Naive thymus-derived CD4-positive, alpha-beta T cell (primary cell): ENCODE measurements at regions of chr1 and their contacts with region 1.

Region 1: DNA sequence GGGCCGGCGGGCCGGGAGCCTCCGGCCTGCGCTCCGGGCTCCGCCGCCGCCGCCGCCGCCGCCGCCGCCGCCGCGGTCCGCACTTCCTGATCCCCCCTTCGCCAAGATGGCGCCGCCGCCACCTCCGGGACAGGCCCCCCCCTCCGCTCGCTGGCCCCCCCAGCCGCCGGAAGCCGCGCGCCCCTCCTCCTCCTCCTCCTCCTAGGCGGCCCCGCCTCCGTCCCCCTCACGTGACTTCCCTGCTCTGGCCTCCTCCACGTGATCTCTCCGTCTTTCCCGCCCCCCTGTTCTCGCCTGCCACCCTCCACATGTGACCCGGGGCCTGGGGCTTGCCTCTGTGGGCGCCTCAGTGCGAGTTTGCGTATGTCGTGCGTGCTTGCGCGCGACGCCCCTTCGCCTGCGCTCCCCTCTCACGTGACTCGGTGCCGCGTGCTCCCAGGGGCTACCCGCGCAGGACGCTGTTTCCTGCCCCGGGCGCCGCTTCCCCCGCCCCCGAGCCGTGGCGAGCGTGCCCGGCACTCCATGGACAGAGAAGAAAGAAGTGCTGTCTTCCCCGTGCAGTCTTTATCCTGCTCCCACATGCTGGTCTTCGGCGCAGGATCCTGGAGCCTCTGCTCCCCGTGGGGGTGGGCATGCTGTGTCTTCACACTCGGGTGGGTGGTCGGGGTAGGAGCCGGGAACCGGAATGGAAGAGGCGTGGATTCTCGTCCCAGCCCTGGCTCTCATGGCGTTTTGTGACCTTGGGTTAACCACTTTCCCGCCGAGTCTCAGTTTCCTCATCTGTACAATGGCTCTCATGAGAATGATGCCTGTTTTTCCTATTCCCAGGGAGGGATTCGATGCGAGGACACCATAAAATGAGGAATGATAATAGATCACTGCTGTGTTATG is at the start of gene UBE2Q1:
- DNase-seq: peak; percentile 92 to 100 (median 100)
- ATAC-seq: peak; percentile 94
- H3K4me3 ChIP-seq: peak within 1 kb of the TSS; percentile 81
- H3K4me3 Mint-ChIP-seq: peak within 1 kb of the TSS; percentile 89 to 98 (median 96)
- H3K27ac ChIP-seq: peak within 1 kb of the TSS; percentile 86
- H3K27ac Mint-ChIP-seq: peak within 1 kb of the TSS; percentile 90 to 97 (median 94)
- H3K4me1 ChIP-seq: peaks cover 18 to 23% of the 10 kb centered on the region in 2 donors
- H3K4me1 Mint-ChIP-seq: peaks cover 12 to 45% (median 39%) of the 10 kb centered on the region in 7 donors
- H3K27me3 ChIP-seq: no peaks in the 10 kb centered on the region
- H3K27me3 Mint-ChIP-seq: peaks cover 0 to 2% (median 0%) of the 10 kb centered on the region in 5 donors
- total RNA-seq, gene UBE2Q1: 63.2 to 117 (median 106) TPM

Region 2: GRCh38 chr1:154183045-154183915 is 375.5 kb before region 1 on chr1:
- CTCF ChIA-PET with region 1: no interaction called
- POLR2A ChIA-PET with region 1: no interaction called
- intact Hi-C with region 1: loop called (anchors 2 to 10 kb)
- DNase-seq: peak; percentile 84 to 94 (median 94)
- ATAC-seq: peak; percentile 89
- H3K4me3 ChIP-seq: peak overlapping the region; percentile 93
- H3K4me3 Mint-ChIP-seq: peak overlapping the region; percentile 98 to 100 (median 100)
- H3K27ac ChIP-seq: peak overlapping the region; percentile 95
- H3K27ac Mint-ChIP-seq: peak overlapping the region; percentile 98 to 100 (median 99)
- H3K4me1 ChIP-seq: peaks cover 25 to 44% of the 10 kb centered on the region in 2 donors
- H3K4me1 Mint-ChIP-seq: peaks cover 44 to 49% (median 48%) of the 10 kb centered on the region in 7 donors
- H3K27me3 ChIP-seq: no peaks in the 10 kb centered on the region
- H3K27me3 Mint-ChIP-seq: peaks cover 0 to 7% (median 0%) of the 10 kb centered on the region in 5 donors

Region 3: DNA sequence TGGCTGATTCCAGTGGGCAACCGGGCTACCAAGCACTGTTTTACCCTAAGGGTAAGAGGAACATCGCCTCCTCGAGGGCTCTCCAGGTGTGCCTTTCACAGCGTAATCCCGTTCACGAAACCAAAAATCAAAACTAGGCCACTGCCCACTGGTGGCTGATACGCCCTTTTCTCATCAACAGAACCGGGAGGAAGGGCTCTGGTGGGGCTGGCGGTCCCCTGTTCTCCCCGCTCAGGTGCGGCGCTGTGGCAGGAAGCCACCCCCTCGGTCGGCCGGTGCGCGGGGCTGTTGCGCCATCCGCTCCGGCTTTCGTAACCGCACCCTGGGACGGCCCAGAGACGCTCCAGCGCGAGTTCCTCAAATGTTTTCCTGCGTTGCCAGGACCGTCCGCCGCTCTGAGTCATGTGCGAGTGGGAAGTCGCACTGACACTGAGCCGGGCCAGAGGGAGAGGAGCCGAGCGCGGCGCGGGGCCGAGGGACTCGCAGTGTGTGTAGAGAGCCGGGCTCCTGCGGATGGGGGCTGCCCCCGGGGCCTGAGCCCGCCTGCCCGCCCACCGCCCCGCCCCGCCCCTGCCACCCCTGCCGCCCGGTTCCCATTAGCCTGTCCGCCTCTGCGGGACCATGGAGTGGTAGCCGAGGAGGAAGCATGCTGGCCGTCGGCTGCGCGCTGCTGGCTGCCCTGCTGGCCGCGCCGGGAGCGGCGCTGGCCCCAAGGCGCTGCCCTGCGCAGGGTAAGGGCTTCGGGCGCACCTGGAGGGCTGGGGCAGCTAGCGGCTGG is 153.6 kb before region 1 on chr1 and contains the start of gene IL6R:
- CTCF ChIA-PET with region 1: no interaction called
- POLR2A ChIA-PET with region 1: interaction called, 4 read pairs
- intact Hi-C with region 1: loop called (anchors 2 to 5 kb)
- DNase-seq: peak; percentile 63 to 83 (median 77)
- ATAC-seq: peak; percentile 70
- H3K4me3 ChIP-seq: peak within 1 kb of the TSS; percentile 72
- H3K4me3 Mint-ChIP-seq: peak within 1 kb of the TSS; percentile 88 to 98 (median 96)
- H3K27ac ChIP-seq: peak within 1 kb of the TSS; percentile 75
- H3K27ac Mint-ChIP-seq: peak within 1 kb of the TSS; percentile 77 to 99 (median 95)
- H3K4me1 ChIP-seq: peaks cover 51 to 68% of the 10 kb centered on the region in 2 donors
- H3K4me1 Mint-ChIP-seq: peaks cover 50 to 75% (median 68%) of the 10 kb centered on the region in 7 donors
- H3K27me3 ChIP-seq: no peaks in the 10 kb centered on the region
- H3K27me3 Mint-ChIP-seq: peaks cover 0 to 4% (median 0%) of the 10 kb centered on the region in 5 donors
- total RNA-seq, gene IL6R: 5.2 to 91.6 (median 85.6) TPM

Region 4: GRCh38 chr1:154533952-154534844 is 24.6 kb before region 1 on chr1:
- CTCF ChIA-PET with region 1: no interaction called
- POLR2A ChIA-PET with region 1: no interaction called
- intact Hi-C with region 1: no loop called
- DNase-seq: no peak
- ATAC-seq: no peak
- H3K4me3 ChIP-seq: no peak overlapping the region
- H3K4me3 Mint-ChIP-seq: no peak overlapping the region
- H3K27ac ChIP-seq: no peak overlapping the region
- H3K27ac Mint-ChIP-seq: no peak overlapping the region
- H3K4me1 ChIP-seq: no peaks in the 10 kb centered on the region
- H3K4me1 Mint-ChIP-seq: no peaks in the 10 kb centered on the region
- H3K27me3 ChIP-seq: no peaks in the 10 kb centered on the region
- H3K27me3 Mint-ChIP-seq: peaks cover 0 to 24% (median 4%) of the 10 kb centered on the region in 5 donors

Region 5: GRCh38 chr1:154614901-154615300 is 56.1 kb after region 1 on chr1:
- CTCF ChIA-PET with region 1: no interaction called
- POLR2A ChIA-PET with region 1: no interaction called
- intact Hi-C with region 1: no loop called
- DNase-seq: no peak
- ATAC-seq: no peak
- H3K4me3 ChIP-seq: no peak overlapping the region
- H3K4me3 Mint-ChIP-seq: peak overlapping the region in 1 of 10 donors; percentile 5
- H3K27ac ChIP-seq: no peak overlapping the region
- H3K27ac Mint-ChIP-seq: peak overlapping the region in 7 of 9 donors; percentile 5 to 72 (median 51)
- H3K4me1 ChIP-seq: peaks cover 6 to 20% of the 10 kb centered on the region in 2 donors
- H3K4me1 Mint-ChIP-seq: peaks cover 30 to 66% (median 65%) of the 10 kb centered on the region in 7 donors
- H3K27me3 ChIP-seq: no peaks in the 10 kb centered on the region
- H3K27me3 Mint-ChIP-seq: no peaks in the 10 kb centered on the region

Region 6: DNA sequence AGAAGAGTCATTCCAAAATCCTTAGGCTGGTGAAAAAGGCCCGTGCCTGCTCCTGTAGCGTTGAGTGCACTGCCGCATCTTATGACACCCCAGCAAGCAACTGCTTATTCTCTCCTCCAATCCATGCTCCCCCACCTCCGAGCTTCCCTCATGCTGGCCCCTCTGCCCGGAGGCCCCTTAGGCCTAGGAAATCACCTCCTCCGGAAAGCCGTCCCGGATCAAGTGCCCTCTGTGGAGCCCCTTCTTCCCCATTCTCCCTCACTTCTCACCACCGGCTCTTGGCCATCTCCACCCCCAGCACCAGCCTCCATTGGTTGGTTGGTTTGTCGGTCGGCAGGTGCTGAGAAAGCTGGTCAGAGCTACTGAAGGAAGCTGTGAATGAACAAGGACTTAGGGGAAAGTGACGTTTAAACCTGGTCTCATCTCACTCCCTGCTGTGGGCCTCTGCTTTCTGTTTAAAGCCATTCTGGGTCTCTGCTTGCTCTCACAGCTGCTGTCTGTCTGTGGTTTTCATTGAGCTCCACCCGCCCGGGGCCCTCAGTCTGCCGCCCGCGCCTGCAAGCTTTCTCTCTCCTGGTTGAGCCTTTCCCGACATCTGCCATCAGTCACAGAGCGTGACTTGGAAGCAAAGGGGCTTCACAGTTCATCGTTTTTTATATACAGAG is 189.1 kb after region 1 on chr1:
- CTCF ChIA-PET with region 1: interaction called, 4 read pairs
- POLR2A ChIA-PET with region 1: no interaction called
- intact Hi-C with region 1: loop called (anchors 2 to 5 kb)
- DNase-seq: peak in 8 of 9 donors; percentile 51 to 64 (median 56)
- ATAC-seq: peak; percentile 82
- H3K4me3 ChIP-seq: peak overlapping the region; percentile 46
- H3K4me3 Mint-ChIP-seq: peak overlapping the region; percentile 71 to 88 (median 84)
- H3K27ac ChIP-seq: peak overlapping the region; percentile 73
- H3K27ac Mint-ChIP-seq: peak overlapping the region; percentile 90 to 98 (median 96)
- H3K4me1 ChIP-seq: peaks cover 39 to 47% of the 10 kb centered on the region in 2 donors
- H3K4me1 Mint-ChIP-seq: peaks cover 46 to 70% (median 51%) of the 10 kb centered on the region in 7 donors
- H3K27me3 ChIP-seq: no peaks in the 10 kb centered on the region
- H3K27me3 Mint-ChIP-seq: peaks cover 0 to 24% (median 0%) of the 10 kb centered on the region in 5 donors

Region 7: DNA sequence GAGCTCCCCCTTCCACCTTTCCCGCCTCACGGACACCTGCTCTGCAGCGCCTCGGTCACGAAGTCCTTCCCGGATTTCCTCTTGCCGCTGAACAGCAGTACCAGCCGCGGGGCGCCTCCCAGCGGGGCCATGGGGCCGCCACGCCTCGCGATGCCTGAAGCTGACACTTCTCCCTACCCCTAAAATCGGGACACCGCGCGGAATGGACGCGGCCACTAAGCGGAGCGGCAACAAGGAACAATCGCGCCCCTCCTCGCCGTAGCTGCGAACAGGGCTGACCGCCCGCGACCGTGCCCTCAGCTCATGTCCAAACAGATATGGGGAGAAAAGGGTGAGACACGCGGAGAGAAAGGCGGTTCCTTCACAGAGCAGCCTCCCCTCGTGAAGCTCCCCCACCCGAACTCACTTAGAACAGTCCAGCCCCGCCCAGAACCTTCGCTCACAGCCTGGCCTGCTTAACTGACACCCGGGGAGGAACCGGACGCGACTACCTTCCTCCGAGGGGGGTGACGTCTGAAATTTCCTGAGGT is 377.8 kb after region 1 on chr1 and contains the start of gene PMVK:
- CTCF ChIA-PET with region 1: interaction called, 3 read pairs
- POLR2A ChIA-PET with region 1: no interaction called
- intact Hi-C with region 1: loop called (anchors 1 kb)
- DNase-seq: peak; percentile 84 to 99 (median 97)
- ATAC-seq: peak; percentile 92
- H3K4me3 ChIP-seq: peak within 1 kb of the TSS; percentile 68
- H3K4me3 Mint-ChIP-seq: peak within 1 kb of the TSS; percentile 86 to 99 (median 95)
- H3K27ac ChIP-seq: peak within 1 kb of the TSS; percentile 97
- H3K27ac Mint-ChIP-seq: peak within 1 kb of the TSS; percentile 96 to 100 (median 99)
- H3K4me1 ChIP-seq: peaks cover 25 to 38% of the 10 kb centered on the region in 2 donors
- H3K4me1 Mint-ChIP-seq: peaks cover 41 to 68% (median 50%) of the 10 kb centered on the region in 7 donors
- H3K27me3 ChIP-seq: no peaks in the 10 kb centered on the region
- H3K27me3 Mint-ChIP-seq: no peaks in the 10 kb centered on the region
- total RNA-seq, gene PMVK: 11.3 to 35.1 (median 12.6) TPM

Region 8: DNA sequence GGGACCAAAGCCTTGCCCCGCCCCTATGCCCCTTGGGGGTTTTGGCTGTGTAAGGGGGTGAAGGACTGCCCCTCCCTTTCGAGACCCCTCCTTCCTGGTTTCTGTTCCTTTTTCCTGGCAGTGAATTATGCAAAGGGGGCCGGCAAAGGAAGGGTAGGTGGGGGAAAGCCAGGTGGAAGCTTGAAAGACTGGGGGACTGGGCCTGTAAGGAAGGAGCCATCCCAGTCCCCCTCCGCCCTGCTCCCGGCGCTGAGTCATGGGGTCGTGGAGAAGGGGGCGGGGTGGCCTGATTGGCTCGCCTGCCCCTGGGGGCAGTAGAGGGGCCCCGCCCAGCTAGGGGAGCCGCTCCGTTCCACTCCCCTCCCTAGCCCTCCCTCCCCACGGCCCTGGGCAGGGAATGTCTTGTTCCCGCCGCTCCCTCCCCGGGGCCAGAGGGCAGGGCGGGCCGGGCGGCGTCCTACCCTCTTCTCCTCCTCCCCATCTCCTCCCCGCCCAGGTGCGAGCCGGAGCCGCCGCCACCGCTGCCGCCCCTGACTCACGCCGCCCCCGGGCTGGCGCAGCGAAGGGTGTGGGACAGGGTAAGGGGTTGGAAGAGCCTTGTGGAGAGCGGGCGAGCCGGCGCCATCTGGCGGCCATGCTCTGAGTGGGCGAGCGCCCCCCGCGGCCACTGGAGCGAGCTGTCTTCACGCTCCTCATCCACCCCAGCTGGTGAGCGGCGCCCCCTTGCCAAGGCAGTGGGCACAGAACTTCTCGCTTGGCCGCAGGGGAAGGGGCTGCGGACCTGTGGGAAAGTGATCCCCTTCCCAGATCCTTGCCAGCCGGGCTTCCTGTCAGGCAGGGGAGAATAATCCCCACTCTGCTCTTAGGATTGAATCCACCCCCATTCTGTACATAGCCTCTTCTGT is 458.5 kb after region 1 on chr1:
- CTCF ChIA-PET with region 1: interaction called, 4 read pairs
- POLR2A ChIA-PET with region 1: interaction called, 4 read pairs
- intact Hi-C with region 1: loop called in 1 of 2 experiments (anchors 1 kb)
- DNase-seq: peak; percentile 85 to 93 (median 89)
- ATAC-seq: peak; percentile 98
- H3K4me3 ChIP-seq: peak overlapping the region; percentile 50
- H3K4me3 Mint-ChIP-seq: peak overlapping the region; percentile 51 to 84 (median 70)
- H3K27ac ChIP-seq: peak overlapping the region; percentile 83
- H3K27ac Mint-ChIP-seq: peak overlapping the region; percentile 38 to 98 (median 94)
- H3K4me1 ChIP-seq: peaks cover 38 to 65% of the 10 kb centered on the region in 2 donors
- H3K4me1 Mint-ChIP-seq: peaks cover 38 to 83% (median 71%) of the 10 kb centered on the region in 7 donors
- H3K27me3 ChIP-seq: no peaks in the 10 kb centered on the region
- H3K27me3 Mint-ChIP-seq: no peaks in the 10 kb centered on the region